T-cell (primary cell): ENCODE measurements at regions of chr5 and their contacts with region 1.

Region 1: GRCh38 chr5:62412537-62413329 is at the start of gene IPO11:
- DNase-seq: peak; percentile 97 to 99 (median 98)
- ATAC-seq: peak; percentile 94 to 95 (median 94)
- H3K4me3 ChIP-seq: peak within 1 kb of the TSS; percentile 93 to 98
- H3K4me3 Mint-ChIP-seq: peak within 1 kb of the TSS; percentile 87 to 91 (median 88)
- H3K27ac ChIP-seq: peak within 1 kb of the TSS; percentile 66
- H3K27ac Mint-ChIP-seq: peak within 1 kb of the TSS; percentile 90 to 93
- H3K4me1 ChIP-seq: peaks cover 13 to 15% of the 10 kb centered on the region in 2 experiments
- H3K4me1 Mint-ChIP-seq: peaks cover 25 to 31% (median 26%) of the 10 kb centered on the region in 3 donors
- H3K27me3 ChIP-seq: no peaks in the 10 kb centered on the region
- H3K27me3 Mint-ChIP-seq: peaks cover 0 to 2% of the 10 kb centered on the region in 2 donors
- total RNA-seq, gene IPO11: 17.4 to 25.7 (median 24.7) TPM

Region 2: DNA sequence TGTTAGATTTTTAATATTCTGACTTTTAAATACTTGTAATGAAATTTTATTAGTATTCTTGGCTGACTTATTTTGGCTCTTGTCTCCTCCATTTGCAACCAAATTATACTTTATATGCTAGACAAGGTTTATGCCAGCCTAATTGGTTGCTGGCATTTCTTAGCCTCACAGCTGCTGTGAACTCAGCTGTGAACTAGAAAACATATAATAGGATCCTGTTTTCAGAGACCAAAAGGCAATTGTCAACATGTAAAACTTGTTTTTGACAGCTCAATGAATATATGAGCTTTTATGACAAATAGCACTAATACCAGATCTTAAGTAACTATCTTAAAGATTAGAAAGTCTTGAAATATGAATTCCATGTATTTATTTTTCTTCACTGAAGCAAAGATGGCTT is 80.8 kb before region 1 on chr5:
- CTCF ChIA-PET with region 1: no interaction called
- POLR2A ChIA-PET with region 1: no interaction called
- DNase-seq: no peak
- ATAC-seq: no peak
- H3K4me3 ChIP-seq: no peak overlapping the region
- H3K4me3 Mint-ChIP-seq: no peak overlapping the region
- H3K27ac ChIP-seq: no peak overlapping the region
- H3K27ac Mint-ChIP-seq: peak overlapping the region; percentile 43 to 48
- H3K4me1 ChIP-seq: peaks cover 4 to 38% of the 10 kb centered on the region in 2 experiments
- H3K4me1 Mint-ChIP-seq: peaks cover 75 to 83% (median 83%) of the 10 kb centered on the region in 3 donors
- H3K27me3 ChIP-seq: no peaks in the 10 kb centered on the region
- H3K27me3 Mint-ChIP-seq: no peaks in the 10 kb centered on the region

Region 3: DNA sequence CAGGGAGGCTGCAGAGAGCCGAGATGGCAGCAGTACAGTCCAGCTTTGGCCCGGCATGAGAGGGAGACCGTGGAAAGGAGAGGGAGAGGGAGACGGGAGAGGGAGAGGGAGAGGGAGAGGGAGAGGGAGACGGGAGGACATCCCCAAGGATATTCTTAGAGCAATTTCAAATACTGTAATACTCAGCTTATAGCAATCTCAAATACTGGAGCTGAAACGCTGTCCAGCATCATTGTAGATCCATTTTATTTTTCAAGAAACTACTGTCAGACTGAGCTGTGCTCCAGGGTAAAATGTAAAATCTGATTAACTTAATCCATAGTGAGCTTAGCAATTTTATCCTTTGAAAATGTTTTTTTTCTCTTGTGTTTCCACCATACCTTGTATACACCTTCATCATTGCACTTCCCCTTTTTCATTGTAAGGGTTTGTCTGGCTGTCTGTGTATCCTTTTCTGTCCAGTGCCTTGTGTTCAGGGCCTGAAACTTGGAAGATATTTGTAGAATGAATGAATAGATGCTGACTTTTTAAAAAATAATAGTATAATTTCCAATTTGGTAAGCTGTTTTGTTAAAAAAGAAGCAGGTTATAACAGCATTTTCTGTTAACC is 101.9 kb after region 1 on chr5:
- CTCF ChIA-PET with region 1: interaction called in 1 of 2 experiments, 10 read pairs
- POLR2A ChIA-PET with region 1: no interaction called
- DNase-seq: no peak
- ATAC-seq: no peak
- H3K4me3 ChIP-seq: no peak overlapping the region
- H3K4me3 Mint-ChIP-seq: no peak overlapping the region
- H3K27ac ChIP-seq: no peak overlapping the region
- H3K27ac Mint-ChIP-seq: no peak overlapping the region
- H3K4me1 ChIP-seq: no peaks in the 10 kb centered on the region
- H3K4me1 Mint-ChIP-seq: no peaks in the 10 kb centered on the region
- H3K27me3 ChIP-seq: no peaks in the 10 kb centered on the region
- H3K27me3 Mint-ChIP-seq: no peaks in the 10 kb centered on the region

Region 4: DNA sequence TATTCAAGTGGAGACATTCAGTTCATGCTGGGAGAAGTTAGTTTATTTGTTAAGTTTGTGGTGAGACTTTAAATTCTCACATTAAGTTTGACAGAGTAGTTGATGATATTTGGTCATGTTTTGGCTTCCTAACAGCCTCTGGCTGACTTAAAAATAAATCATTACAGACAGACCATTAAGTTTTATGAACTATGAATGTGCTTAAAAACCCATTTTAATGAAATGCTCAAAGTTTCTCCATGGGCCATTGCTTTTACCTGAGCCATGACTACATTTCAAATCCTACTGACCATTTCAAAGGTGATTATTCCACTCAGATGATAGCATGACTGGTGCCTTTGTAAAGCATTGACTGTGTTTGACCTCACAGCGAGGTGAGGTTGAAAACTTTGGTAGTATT is 358.6 kb after region 1 on chr5:
- CTCF ChIA-PET with region 1: interaction called in 1 of 2 experiments, 14 read pairs
- POLR2A ChIA-PET with region 1: no interaction called
- DNase-seq: no peak
- ATAC-seq: no peak
- H3K4me3 ChIP-seq: no peak overlapping the region
- H3K4me3 Mint-ChIP-seq: no peak overlapping the region
- H3K27ac ChIP-seq: no peak overlapping the region
- H3K27ac Mint-ChIP-seq: no peak overlapping the region
- H3K4me1 ChIP-seq: no peaks in the 10 kb centered on the region
- H3K4me1 Mint-ChIP-seq: no peaks in the 10 kb centered on the region
- H3K27me3 ChIP-seq: no peaks in the 10 kb centered on the region
- H3K27me3 Mint-ChIP-seq: no peaks in the 10 kb centered on the region